Calu3 (cell line): ENCODE measurements at regions of chr4 and their contacts with region 1.

Region 1: DNA sequence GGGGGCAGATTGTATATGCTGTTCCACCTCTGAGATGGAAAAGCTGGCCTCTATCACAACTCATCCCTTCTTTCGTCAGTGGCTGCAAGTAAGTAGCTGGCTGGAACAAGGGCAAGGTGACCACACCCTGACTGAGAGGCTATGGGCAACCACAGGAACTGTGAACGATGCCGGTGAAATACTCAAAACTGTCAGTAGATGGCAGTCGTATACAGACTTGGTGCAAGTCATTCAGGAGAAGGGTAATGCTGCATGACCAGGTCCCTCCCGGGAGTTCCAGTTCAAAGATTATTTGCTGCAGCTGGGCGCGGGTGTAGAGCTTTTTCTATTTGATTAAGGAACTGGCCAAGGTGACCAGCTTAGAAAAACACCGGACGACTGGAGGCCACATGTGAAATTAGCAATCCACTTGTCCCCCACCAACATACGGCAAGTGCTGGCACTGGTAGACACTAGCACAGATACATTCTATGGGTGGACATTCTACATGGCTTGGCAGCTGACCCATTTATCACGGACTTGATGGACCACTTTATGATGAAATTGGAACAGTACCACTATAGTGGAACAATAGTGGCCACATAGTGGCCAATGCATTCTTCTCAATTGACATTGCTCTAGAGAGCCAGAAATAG is 726.7 kb downstream of the TRAM1L1 start:
- DNase-seq: peak; percentile 72
- H3K4me3 Mint-ChIP-seq: no peak overlapping the region
- H3K27ac Mint-ChIP-seq: no peak overlapping the region
- H3K4me1 Mint-ChIP-seq: no peaks in the 10 kb centered on the region
- H3K27me3 Mint-ChIP-seq: no peaks in the 10 kb centered on the region
- CTCF ChIP-seq: peak; percentile 29

Region 2: DNA sequence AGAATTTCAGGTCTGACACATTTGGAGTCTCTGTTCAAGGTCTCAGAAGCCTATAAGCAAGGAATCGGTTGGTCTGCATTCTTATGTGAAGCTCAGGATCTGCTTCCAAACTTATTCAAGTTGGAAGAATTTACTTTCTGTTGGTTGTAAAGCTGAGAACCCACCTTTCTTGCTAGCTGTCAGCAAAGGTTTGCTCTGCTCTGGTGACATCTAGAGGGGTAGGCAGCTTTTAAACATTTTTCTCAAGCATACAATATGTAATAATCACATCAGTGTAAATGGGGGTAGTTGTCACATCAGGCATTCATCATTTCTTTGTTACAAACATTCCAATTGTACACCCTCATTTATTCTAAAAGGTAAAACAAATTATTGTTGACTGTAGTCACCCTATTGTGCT is 208.6 kb before region 1 on chr4:
- CTCF ChIA-PET with region 1: no interaction called
- intact Hi-C with region 1: no loop called
- DNase-seq: no peak
- H3K4me3 Mint-ChIP-seq: no peak overlapping the region
- H3K27ac Mint-ChIP-seq: no peak overlapping the region
- H3K4me1 Mint-ChIP-seq: no peaks in the 10 kb centered on the region
- H3K27me3 Mint-ChIP-seq: no peaks in the 10 kb centered on the region
- CTCF ChIP-seq: no peak

Region 3: GRCh38 chr4:116180157-116180601 is 178.5 kb before region 1 on chr4:
- CTCF ChIA-PET with region 1: no interaction called
- intact Hi-C with region 1: loop called (anchors 5 kb)
- DNase-seq: peak; percentile 2
- H3K4me3 Mint-ChIP-seq: no peak overlapping the region
- H3K27ac Mint-ChIP-seq: no peak overlapping the region
- H3K4me1 Mint-ChIP-seq: no peaks in the 10 kb centered on the region
- H3K27me3 Mint-ChIP-seq: no peaks in the 10 kb centered on the region
- CTCF ChIP-seq: peak; percentile 22